GM13977 (cell line): ENCODE measurements at regions of chr9 and their contacts with region 1.

Region 1: GRCh38 chr9:133098104-133098890 is 22.7 kb downstream of the RALGDS start:
- DNase-seq: no peak
- CTCF ChIP-seq: no peak

Region 2: GRCh38 chr9:133149126-133150107 is 51.1 kb after region 1 on chr9:
- in situ Hi-C with region 1: loop called (anchors 10 kb)
- DNase-seq: peak; percentile 98
- CTCF ChIP-seq: peak; percentile 47

Region 3: GRCh38 chr9:133545494-133546286 is 447.4 kb after region 1 on chr9:
- in situ Hi-C with region 1: no loop called
- DNase-seq: no peak
- CTCF ChIP-seq: no peak